ENCODE measurements at regions of chr4 and their contacts with region 1.

Region 1: DNA sequence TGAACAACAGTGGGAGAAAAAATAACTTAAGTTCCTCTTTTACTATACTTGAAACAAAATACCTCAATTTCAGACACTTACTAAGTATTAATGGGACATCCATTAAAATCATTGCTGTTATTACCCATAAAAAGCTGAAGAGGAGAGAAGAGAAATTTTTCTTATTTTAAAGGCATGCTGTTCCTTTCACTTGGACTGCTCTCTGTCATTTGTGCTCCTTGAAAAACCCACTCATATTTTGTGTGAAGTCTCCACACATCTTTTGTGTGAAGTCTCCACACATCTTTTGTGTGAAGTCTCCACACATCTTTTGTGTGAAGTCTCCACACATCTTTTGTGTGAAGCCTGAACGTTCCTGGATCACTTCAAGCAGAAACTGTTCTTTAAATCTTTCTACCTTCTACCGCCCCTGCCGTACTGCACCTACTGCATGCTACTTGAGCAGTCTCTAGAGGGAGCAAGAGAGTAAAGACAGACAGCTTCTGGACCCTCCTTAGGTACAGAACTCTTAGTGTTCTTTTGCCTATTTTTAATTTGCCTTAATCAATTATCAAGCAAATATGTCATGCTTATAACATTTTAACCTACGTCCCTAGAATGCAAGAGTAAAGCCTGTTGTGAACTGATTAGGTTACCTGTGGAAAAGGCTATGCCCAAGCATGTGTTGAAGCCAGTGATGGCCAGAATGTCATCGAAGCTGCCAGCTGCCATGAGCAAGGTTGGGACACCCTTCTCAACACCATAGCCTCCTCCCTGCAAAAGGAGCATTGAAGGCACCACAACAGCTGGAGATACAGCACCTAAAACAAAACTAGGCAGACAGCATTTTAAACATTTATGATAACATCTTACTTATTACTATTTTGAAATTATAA is 27.1 kb upstream of the SLC9B1 start:
- DNase-seq: peak in 7 of 9 experiments; percentile 2 to 71 (median 40)
- ATAC-seq: peak; percentile 98
- H3K4me3 ChIP-seq: no peak overlapping the region
- H3K4me3 Mint-ChIP-seq: no peak overlapping the region
- H3K27ac ChIP-seq: no peak overlapping the region
- H3K27ac Mint-ChIP-seq: no peak overlapping the region
- H3K4me1 ChIP-seq: no peaks in the 10 kb centered on the region
- H3K4me1 Mint-ChIP-seq: no peaks in the 10 kb centered on the region
- H3K27me3 ChIP-seq: no peaks in the 10 kb centered on the region
- H3K27me3 Mint-ChIP-seq: no peaks in the 10 kb centered on the region
- CTCF ChIP-seq: peak; percentile 80

Region 2: GRCh38 chr4:103008875-103009729 is 37.6 kb before region 1 on chr4:
- CTCF ChIA-PET with region 1: no interaction called
- POLR2A ChIA-PET with region 1: no interaction called
- intact Hi-C with region 1: no loop called
- DNase-seq: peak in 3 of 9 experiments; percentile 19 to 82 (median 75)
- ATAC-seq: peak; percentile 97
- H3K4me3 ChIP-seq: no peak overlapping the region
- H3K4me3 Mint-ChIP-seq: no peak overlapping the region
- H3K27ac ChIP-seq: no peak overlapping the region
- H3K27ac Mint-ChIP-seq: no peak overlapping the region
- H3K4me1 ChIP-seq: no peaks in the 10 kb centered on the region
- H3K4me1 Mint-ChIP-seq: peaks cover 2% of the 10 kb centered on the region
- H3K27me3 ChIP-seq: no peaks in the 10 kb centered on the region
- H3K27me3 Mint-ChIP-seq: no peaks in the 10 kb centered on the region
- CTCF ChIP-seq: peak; percentile 85

Region 3: GRCh38 chr4:103075901-103076739 is 29.5 kb after region 1 on chr4:
- CTCF ChIA-PET with region 1: interaction called, 4 read pairs
- POLR2A ChIA-PET with region 1: interaction called, 9 read pairs
- intact Hi-C with region 1: loop called in 1 of 2 experiments (anchors 1 kb)
- DNase-seq: peak; percentile 39 to 84 (median 64)
- ATAC-seq: peak; percentile 79
- H3K4me3 ChIP-seq: peak overlapping the region; percentile 80
- H3K4me3 Mint-ChIP-seq: peak overlapping the region; percentile 94
- H3K27ac ChIP-seq: peak overlapping the region; percentile 89 to 95
- H3K27ac Mint-ChIP-seq: peak overlapping the region; percentile 99
- H3K4me1 ChIP-seq: peaks cover 25% of the 10 kb centered on the region
- H3K4me1 Mint-ChIP-seq: peaks cover 49% of the 10 kb centered on the region
- H3K27me3 ChIP-seq: no peaks in the 10 kb centered on the region
- H3K27me3 Mint-ChIP-seq: no peaks in the 10 kb centered on the region
- CTCF ChIP-seq: no peak

Region 4: DNA sequence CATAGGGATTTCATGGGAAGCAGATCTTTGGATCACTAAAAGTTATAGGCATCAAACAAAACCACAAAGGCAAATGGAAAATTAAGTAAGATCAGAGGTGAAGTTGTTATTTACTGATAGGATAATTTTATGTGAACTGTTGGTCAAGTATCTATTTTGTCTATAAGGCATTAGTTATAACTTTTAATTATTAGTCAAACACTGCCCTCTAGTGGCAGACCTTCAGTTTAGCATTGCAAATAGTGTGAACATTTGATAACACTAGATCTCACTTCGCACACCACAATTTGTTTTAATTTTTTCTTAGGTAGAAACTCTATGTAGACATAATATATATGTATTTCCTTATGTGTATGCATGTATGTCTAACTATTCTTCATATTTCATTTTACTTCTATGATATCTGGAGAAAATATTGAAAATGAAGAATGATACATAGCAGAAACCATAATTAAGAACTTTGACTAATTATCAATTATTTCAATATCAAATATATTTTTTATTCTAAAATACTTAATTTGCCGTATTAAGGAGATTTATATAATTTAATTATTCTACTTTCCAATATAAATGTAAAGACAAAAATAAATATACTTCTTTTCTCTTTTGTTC is 887.6 kb after region 1 on chr4:
- CTCF ChIA-PET with region 1: no interaction called
- POLR2A ChIA-PET with region 1: no interaction called
- intact Hi-C with region 1: loop called in 1 of 2 experiments (anchors 10 kb)
- DNase-seq: peak in 2 of 9 experiments; percentile 13 to 27
- ATAC-seq: no peak
- H3K4me3 ChIP-seq: no peak overlapping the region
- H3K4me3 Mint-ChIP-seq: no peak overlapping the region
- H3K27ac ChIP-seq: no peak overlapping the region
- H3K27ac Mint-ChIP-seq: no peak overlapping the region
- H3K4me1 ChIP-seq: no peaks in the 10 kb centered on the region
- H3K4me1 Mint-ChIP-seq: no peaks in the 10 kb centered on the region
- H3K27me3 ChIP-seq: no peaks in the 10 kb centered on the region
- H3K27me3 Mint-ChIP-seq: no peaks in the 10 kb centered on the region
- CTCF ChIP-seq: peak; percentile 65